ENCODE measurements at regions of chr4 and their contacts with region 1.

Region 1: GRCh38 chr4:158850800-158851644 is 82.2 kb downstream of the FNIP2 start:
- DNase-seq: peak in 4 of 5 donors; percentile 22 to 37 (median 31)
- H3K4me3 ChIP-seq: no peak overlapping the region
- H3K4me3 Mint-ChIP-seq: no peak overlapping the region
- H3K27ac ChIP-seq: no peak overlapping the region
- H3K27ac Mint-ChIP-seq: no peak overlapping the region
- H3K4me1 ChIP-seq: peaks cover 5% of the 10 kb centered on the region
- H3K4me1 Mint-ChIP-seq: peaks cover 7 to 11% (median 8%) of the 10 kb centered on the region in 4 donors
- H3K27me3 ChIP-seq: no peaks in the 10 kb centered on the region
- H3K27me3 Mint-ChIP-seq: no peaks in the 10 kb centered on the region

Region 2: GRCh38 chr4:157992038-157992705 is 858.9 kb before region 1 on chr4:
- CTCF ChIA-PET with region 1: no interaction called
- POLR2A ChIA-PET with region 1: no interaction called
- intact Hi-C with region 1: loop called (anchors 2 kb)
- DNase-seq: peak in 4 of 5 donors; percentile 18 to 37 (median 28)
- H3K4me3 ChIP-seq: no peak overlapping the region
- H3K4me3 Mint-ChIP-seq: peak overlapping the region in 5 of 8 donors; percentile 18 to 68 (median 45)
- H3K27ac ChIP-seq: no peak overlapping the region
- H3K27ac Mint-ChIP-seq: peak overlapping the region in 1 of 7 donors; percentile 41
- H3K4me1 ChIP-seq: no peaks in the 10 kb centered on the region
- H3K4me1 Mint-ChIP-seq: peaks cover 0 to 4% (median 0%) of the 10 kb centered on the region in 4 donors
- H3K27me3 ChIP-seq: no peaks in the 10 kb centered on the region
- H3K27me3 Mint-ChIP-seq: no peaks in the 10 kb centered on the region

Region 3: GRCh38 chr4:158302076-158302866 is 548.8 kb before region 1 on chr4:
- CTCF ChIA-PET with region 1: no interaction called
- POLR2A ChIA-PET with region 1: no interaction called
- intact Hi-C with region 1: no loop called
- DNase-seq: no peak
- H3K4me3 ChIP-seq: no peak overlapping the region
- H3K4me3 Mint-ChIP-seq: no peak overlapping the region
- H3K27ac ChIP-seq: no peak overlapping the region
- H3K27ac Mint-ChIP-seq: no peak overlapping the region
- H3K4me1 ChIP-seq: no peaks in the 10 kb centered on the region
- H3K4me1 Mint-ChIP-seq: no peaks in the 10 kb centered on the region
- H3K27me3 ChIP-seq: no peaks in the 10 kb centered on the region
- H3K27me3 Mint-ChIP-seq: peaks cover 0 to 1% of the 10 kb centered on the region in 2 donors

Region 4: DNA sequence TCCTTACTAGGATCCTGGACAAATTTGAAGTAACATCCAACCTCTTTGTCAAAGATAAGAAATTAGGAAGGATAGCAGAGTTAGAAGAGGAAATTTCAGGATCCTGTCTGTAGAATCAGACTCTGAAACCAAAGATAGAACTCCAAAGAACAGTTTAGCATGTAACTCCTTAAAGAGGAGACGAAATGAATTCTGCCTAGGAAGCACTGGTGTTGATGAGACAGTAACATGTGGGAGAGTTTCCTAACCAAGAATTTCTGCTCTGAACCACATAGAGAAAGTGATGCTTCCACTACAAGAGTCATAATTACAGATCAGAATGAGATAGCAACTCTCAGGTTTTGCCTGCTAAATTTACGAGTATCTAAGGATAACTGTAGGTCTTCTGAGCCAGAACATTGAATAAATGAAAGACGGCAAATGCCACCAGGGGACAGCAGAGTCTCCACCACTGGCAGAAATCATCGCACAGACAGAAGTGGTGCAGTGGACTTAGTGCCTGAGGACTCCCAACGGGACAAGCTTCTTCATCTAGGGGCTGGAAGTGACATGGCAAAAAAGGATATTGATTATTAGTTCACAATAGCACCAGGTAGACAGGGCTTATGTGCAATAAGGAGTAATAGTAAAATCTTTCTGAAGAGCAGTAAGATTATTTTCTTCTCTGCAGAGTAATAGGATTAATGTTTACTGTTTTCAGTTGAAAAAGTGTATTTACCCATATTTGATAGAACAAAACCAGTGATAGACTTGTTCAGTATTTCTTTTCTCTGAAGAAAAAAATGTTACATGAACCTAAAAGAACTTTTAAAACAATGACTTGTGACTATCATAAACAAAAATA is 121.1 kb before region 1 on chr4:
- CTCF ChIA-PET with region 1: interaction called, 38 read pairs
- POLR2A ChIA-PET with region 1: no interaction called
- intact Hi-C with region 1: loop called (anchors 1 kb)
- DNase-seq: peak in 4 of 5 donors; percentile 51 to 55 (median 54)
- H3K4me3 ChIP-seq: no peak overlapping the region
- H3K4me3 Mint-ChIP-seq: no peak overlapping the region
- H3K27ac ChIP-seq: no peak overlapping the region
- H3K27ac Mint-ChIP-seq: no peak overlapping the region
- H3K4me1 ChIP-seq: no peaks in the 10 kb centered on the region
- H3K4me1 Mint-ChIP-seq: peaks cover 0 to 1% (median 0%) of the 10 kb centered on the region in 4 donors
- H3K27me3 ChIP-seq: peaks cover 5% of the 10 kb centered on the region
- H3K27me3 Mint-ChIP-seq: peaks cover 21 to 22% of the 10 kb centered on the region in 2 donors

Region 5: DNA sequence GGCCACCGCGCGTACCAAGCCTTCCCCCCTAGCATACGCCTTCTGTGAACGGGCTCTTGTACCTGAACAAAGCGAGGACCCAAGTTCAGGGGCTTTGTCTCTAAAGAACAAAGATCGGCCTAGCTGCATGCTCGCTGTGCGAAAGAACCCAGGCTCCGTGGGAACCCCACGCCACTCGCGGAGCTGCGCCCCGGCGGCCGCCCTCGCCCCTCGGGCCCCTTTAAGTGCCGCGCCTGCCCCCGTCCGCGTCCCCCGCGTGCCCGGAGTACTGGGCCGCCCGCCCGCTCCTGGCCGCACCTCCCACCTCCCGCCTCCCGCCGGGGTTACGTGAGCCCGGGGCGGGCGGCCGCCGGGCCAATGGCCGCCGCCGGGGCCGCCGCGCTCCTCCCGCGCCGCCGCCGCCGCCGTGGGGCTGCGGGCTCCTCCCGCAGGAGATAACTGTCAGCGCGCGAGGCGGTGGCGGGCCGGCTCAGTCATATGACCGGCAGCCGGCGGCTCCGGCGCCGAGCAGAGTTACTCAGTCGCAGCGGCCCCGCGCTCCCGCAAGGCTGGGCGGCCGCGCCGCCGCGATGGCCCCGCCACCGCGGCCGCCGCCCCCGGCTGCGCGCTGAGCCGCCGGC is 82.4 kb before region 1 on chr4 and contains the start of gene FNIP2:
- CTCF ChIA-PET with region 1: interaction called, 12 read pairs
- POLR2A ChIA-PET with region 1: no interaction called
- intact Hi-C with region 1: loop called (anchors 2 kb)
- DNase-seq: peak; percentile 75 to 78 (median 76)
- H3K4me3 ChIP-seq: peak within 1 kb of the TSS; percentile 19 to 74
- H3K4me3 Mint-ChIP-seq: peak within 1 kb of the TSS; percentile 96 to 100 (median 98)
- H3K27ac ChIP-seq: peak within 1 kb of the TSS; percentile 55
- H3K27ac Mint-ChIP-seq: peak within 1 kb of the TSS; percentile 90 to 99 (median 97)
- H3K4me1 ChIP-seq: peaks cover 23% of the 10 kb centered on the region
- H3K4me1 Mint-ChIP-seq: peaks cover 21 to 48% (median 35%) of the 10 kb centered on the region in 4 donors
- H3K27me3 ChIP-seq: no peaks in the 10 kb centered on the region
- H3K27me3 Mint-ChIP-seq: no peaks in the 10 kb centered on the region
- total RNA-seq, gene FNIP2: 8.1 to 9.4 TPM

Region 6: GRCh38 chr4:158778156-158778711 is 72.8 kb before region 1 on chr4:
- CTCF ChIA-PET with region 1: interaction called, 16 read pairs
- POLR2A ChIA-PET with region 1: no interaction called
- intact Hi-C with region 1: no loop called
- DNase-seq: peak in 3 of 5 donors; percentile 9 to 17 (median 10)
- H3K4me3 ChIP-seq: peak overlapping the region in 1 of 2 donors; percentile 7
- H3K4me3 Mint-ChIP-seq: peak overlapping the region; percentile 54 to 89 (median 76)
- H3K27ac ChIP-seq: no peak overlapping the region
- H3K27ac Mint-ChIP-seq: peak overlapping the region in 6 of 7 donors; percentile 3 to 84 (median 74)
- H3K4me1 ChIP-seq: peaks cover 20% of the 10 kb centered on the region
- H3K4me1 Mint-ChIP-seq: peaks cover 19 to 39% (median 26%) of the 10 kb centered on the region in 4 donors
- H3K27me3 ChIP-seq: no peaks in the 10 kb centered on the region
- H3K27me3 Mint-ChIP-seq: no peaks in the 10 kb centered on the region

Region 7: DNA sequence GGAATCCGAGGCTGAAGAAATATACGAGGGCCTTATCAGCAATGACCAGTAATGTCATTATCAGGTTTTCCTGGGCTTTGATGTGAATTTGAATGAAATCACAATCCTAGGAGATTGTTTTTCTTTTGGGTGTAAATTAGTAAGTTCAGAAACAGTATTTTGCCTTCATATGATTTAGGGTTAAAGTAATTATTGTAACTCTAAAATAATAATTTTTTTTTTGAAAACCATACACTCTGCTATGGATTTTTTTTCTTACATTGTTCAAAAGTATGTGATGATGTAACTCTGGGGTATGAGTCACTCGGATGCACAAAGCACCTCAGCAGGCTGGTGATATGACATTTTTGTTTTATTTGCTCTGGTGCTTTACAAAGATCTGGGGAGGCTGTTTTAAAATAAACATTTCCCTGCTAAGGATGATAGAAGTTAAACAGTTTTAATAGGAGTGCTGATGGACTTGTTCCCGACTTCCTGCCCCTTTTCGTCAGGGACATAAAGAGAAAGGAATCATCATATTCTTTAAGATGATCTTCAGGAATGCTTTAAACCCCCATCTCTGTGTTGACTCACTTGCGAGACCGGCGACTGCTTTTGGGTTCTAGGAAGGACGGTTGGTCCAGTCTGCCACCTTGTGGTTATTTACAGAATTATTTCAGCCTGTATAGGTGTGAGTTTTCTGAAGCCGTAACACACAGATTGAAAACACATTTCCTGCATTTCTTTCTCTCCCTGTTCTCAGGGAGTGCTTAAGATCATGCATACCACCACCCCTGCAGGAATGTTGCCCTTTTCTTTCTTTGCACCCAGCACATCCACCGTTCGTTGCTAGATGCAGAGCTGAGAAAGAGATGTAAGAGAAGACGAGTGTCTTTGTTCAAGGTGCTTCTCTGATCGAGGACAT is 324.3 kb after region 1 on chr4:
- CTCF ChIA-PET with region 1: interaction called, 25 read pairs
- POLR2A ChIA-PET with region 1: no interaction called
- intact Hi-C with region 1: no loop called
- DNase-seq: peak; percentile 59 to 70 (median 68)
- H3K4me3 ChIP-seq: no peak overlapping the region
- H3K4me3 Mint-ChIP-seq: peak overlapping the region in 4 of 8 donors; percentile 3 to 40 (median 15)
- H3K27ac ChIP-seq: no peak overlapping the region
- H3K27ac Mint-ChIP-seq: peak overlapping the region in 3 of 7 donors; percentile 15 to 78 (median 74)
- H3K4me1 ChIP-seq: peaks cover 16% of the 10 kb centered on the region
- H3K4me1 Mint-ChIP-seq: peaks cover 22 to 39% (median 28%) of the 10 kb centered on the region in 4 donors
- H3K27me3 ChIP-seq: no peaks in the 10 kb centered on the region
- H3K27me3 Mint-ChIP-seq: no peaks in the 10 kb centered on the region

Region 8: GRCh38 chr4:159206427-159206871 is 355.4 kb after region 1 on chr4:
- CTCF ChIA-PET with region 1: interaction called, 34 read pairs
- POLR2A ChIA-PET with region 1: no interaction called
- intact Hi-C with region 1: no loop called
- DNase-seq: peak in 1 of 5 donors; percentile 11
- H3K4me3 ChIP-seq: no peak overlapping the region
- H3K4me3 Mint-ChIP-seq: peak overlapping the region in 4 of 8 donors; percentile 10 to 27 (median 16)
- H3K27ac ChIP-seq: no peak overlapping the region
- H3K27ac Mint-ChIP-seq: peak overlapping the region in 3 of 7 donors; percentile 21 to 55 (median 39)
- H3K4me1 ChIP-seq: peaks cover 17% of the 10 kb centered on the region
- H3K4me1 Mint-ChIP-seq: peaks cover 17 to 33% (median 21%) of the 10 kb centered on the region in 4 donors
- H3K27me3 ChIP-seq: no peaks in the 10 kb centered on the region
- H3K27me3 Mint-ChIP-seq: no peaks in the 10 kb centered on the region